Naive thymus-derived CD4-positive, alpha-beta T cell (primary cell): ENCODE measurements at regions of chr19 and their contacts with region 1.

Region 1: DNA sequence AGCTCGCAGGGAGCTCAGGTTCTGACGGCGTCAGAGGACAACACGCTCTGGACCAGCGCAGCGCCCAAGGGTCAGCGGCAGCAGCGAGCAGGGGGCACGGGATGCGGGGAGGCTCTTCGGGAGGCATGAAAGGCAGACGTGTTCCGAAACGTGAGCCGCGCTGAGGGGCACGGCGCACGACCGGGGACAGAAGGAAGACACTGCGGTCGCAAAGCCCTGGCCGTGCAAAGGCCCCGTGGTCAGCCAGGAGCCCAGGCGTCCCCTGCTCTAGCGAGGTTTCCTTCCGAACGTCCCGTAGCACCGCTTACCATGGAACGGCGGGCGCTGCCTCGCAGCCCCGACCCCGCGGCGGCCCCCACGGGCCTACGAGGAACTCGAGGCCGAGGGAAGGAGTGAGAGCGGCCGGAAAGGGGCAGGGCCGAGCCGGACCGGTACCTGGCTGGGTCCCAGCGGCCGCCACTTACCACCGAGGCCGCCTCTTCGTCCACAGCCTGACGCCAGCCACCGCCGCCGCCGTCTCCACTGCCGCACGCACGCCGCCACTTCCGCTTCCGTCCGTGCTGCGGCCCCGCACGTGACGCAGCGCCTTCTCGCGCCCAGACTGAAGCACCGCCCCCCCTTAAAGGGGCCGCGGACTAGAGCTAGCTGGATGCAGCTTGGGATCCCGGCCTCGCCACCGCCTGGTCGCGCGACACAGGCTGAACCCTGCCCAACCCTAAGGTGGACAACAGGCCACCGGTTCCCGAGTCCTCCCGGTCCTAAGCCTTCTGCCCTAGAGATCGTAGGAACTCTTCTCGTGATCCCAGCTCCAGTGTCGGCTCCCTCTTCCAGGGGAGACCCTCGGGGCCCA is 9.4 kb downstream of the ABHD17A start:
- DNase-seq: peak; percentile 75 to 92 (median 85)
- ATAC-seq: peak; percentile 95
- H3K4me3 ChIP-seq: peak overlapping the region; percentile 83
- H3K4me3 Mint-ChIP-seq: peak overlapping the region; percentile 95 to 100 (median 98)
- H3K27ac ChIP-seq: peak overlapping the region; percentile 98
- H3K27ac Mint-ChIP-seq: peak overlapping the region; percentile 93 to 99 (median 98)
- H3K4me1 ChIP-seq: peaks cover 27 to 31% of the 10 kb centered on the region in 2 donors
- H3K4me1 Mint-ChIP-seq: peaks cover 9 to 41% (median 21%) of the 10 kb centered on the region in 7 donors
- H3K27me3 ChIP-seq: no peaks in the 10 kb centered on the region
- H3K27me3 Mint-ChIP-seq: peaks cover 0 to 2% (median 0%) of the 10 kb centered on the region in 5 donors

Region 2: GRCh38 chr19:1767464-1767933 is 108.4 kb before region 1 on chr19:
- CTCF ChIA-PET with region 1: no interaction called
- POLR2A ChIA-PET with region 1: no interaction called
- intact Hi-C with region 1: no loop called
- DNase-seq: peak; percentile 26 to 77 (median 60)
- ATAC-seq: peak; percentile 89
- H3K4me3 ChIP-seq: no peak overlapping the region
- H3K4me3 Mint-ChIP-seq: no peak overlapping the region
- H3K27ac ChIP-seq: no peak overlapping the region
- H3K27ac Mint-ChIP-seq: no peak overlapping the region
- H3K4me1 ChIP-seq: no peaks in the 10 kb centered on the region
- H3K4me1 Mint-ChIP-seq: no peaks in the 10 kb centered on the region
- H3K27me3 ChIP-seq: peaks cover 13 to 16% of the 10 kb centered on the region in 2 donors
- H3K27me3 Mint-ChIP-seq: peaks cover 58 to 86% (median 66%) of the 10 kb centered on the region in 5 donors

Region 3: GRCh38 chr19:1855040-1855827 is 20.6 kb before region 1 on chr19:
- CTCF ChIA-PET with region 1: interaction called, 3 read pairs
- POLR2A ChIA-PET with region 1: interaction called, 21 read pairs
- intact Hi-C with region 1: no loop called
- DNase-seq: peak; percentile 58 to 89 (median 73)
- ATAC-seq: peak; percentile 78
- H3K4me3 ChIP-seq: peak overlapping the region; percentile 84
- H3K4me3 Mint-ChIP-seq: peak overlapping the region; percentile 79 to 91 (median 87)
- H3K27ac ChIP-seq: peak overlapping the region; percentile 93
- H3K27ac Mint-ChIP-seq: peak overlapping the region; percentile 82 to 96 (median 91)
- H3K4me1 ChIP-seq: peaks cover 28 to 76% of the 10 kb centered on the region in 2 donors
- H3K4me1 Mint-ChIP-seq: peaks cover 11 to 66% (median 51%) of the 10 kb centered on the region in 7 donors
- H3K27me3 ChIP-seq: no peaks in the 10 kb centered on the region
- H3K27me3 Mint-ChIP-seq: no peaks in the 10 kb centered on the region

Region 4: GRCh38 chr19:1896508-1896907 is 20.6 kb after region 1 on chr19:
- CTCF ChIA-PET with region 1: interaction called, 7 read pairs
- POLR2A ChIA-PET with region 1: interaction called, 13 read pairs
- intact Hi-C with region 1: loop called in 1 of 2 experiments (anchors 1 kb)
- DNase-seq: no peak
- ATAC-seq: no peak
- H3K4me3 ChIP-seq: peak overlapping the region; percentile 13
- H3K4me3 Mint-ChIP-seq: peak overlapping the region; percentile 82 to 93 (median 88)
- H3K27ac ChIP-seq: peak overlapping the region; percentile 65
- H3K27ac Mint-ChIP-seq: peak overlapping the region in 7 of 9 donors; percentile 70 to 99 (median 97)
- H3K4me1 ChIP-seq: peaks cover 16 to 29% of the 10 kb centered on the region in 2 donors
- H3K4me1 Mint-ChIP-seq: peaks cover 10 to 46% (median 32%) of the 10 kb centered on the region in 7 donors
- H3K27me3 ChIP-seq: no peaks in the 10 kb centered on the region
- H3K27me3 Mint-ChIP-seq: no peaks in the 10 kb centered on the region

Region 5: DNA sequence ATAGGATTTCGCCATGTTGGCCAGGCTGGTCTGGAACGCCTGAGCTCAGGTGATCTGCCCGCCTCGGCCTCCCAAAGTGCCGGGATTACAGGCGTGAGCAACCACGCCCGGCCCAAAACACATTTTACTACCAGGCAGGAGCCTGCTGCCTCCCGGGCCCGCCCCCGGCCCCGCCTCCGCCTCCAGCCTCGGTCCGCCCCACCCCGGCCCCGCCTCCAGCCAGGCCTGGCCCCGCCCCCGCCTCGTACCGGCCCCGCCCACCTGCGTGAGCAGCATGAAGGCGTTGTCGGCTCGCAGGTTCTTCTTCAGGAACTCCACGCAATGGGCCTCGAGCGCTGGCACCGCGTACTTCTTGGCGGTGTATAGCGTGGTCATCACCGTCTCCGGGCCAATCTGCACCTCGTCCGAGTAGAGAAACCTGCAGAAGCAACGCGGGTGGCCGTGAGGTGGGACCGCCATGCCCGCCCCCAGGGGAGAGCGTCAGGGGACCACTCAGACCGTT is 116.9 kb after region 1 on chr19:
- CTCF ChIA-PET with region 1: interaction called, 12 read pairs
- POLR2A ChIA-PET with region 1: interaction called, 3 read pairs
- intact Hi-C with region 1: no loop called
- DNase-seq: no peak
- ATAC-seq: no peak
- H3K4me3 ChIP-seq: no peak overlapping the region
- H3K4me3 Mint-ChIP-seq: no peak overlapping the region
- H3K27ac ChIP-seq: no peak overlapping the region
- H3K27ac Mint-ChIP-seq: no peak overlapping the region
- H3K4me1 ChIP-seq: no peaks in the 10 kb centered on the region
- H3K4me1 Mint-ChIP-seq: peaks cover 0 to 4% (median 0%) of the 10 kb centered on the region in 7 donors
- H3K27me3 ChIP-seq: no peaks in the 10 kb centered on the region
- H3K27me3 Mint-ChIP-seq: no peaks in the 10 kb centered on the region